WTC11 (cell line): ENCODE measurements at regions of chr3 and their contacts with region 1.

Region 1: GRCh38 chr3:138946181-138947059 is 517 bp downstream of the FOXL2 start:
- DNase-seq: peak; percentile 71
- ATAC-seq: peak; percentile 4
- H3K4me3 Mint-ChIP-seq: peak overlapping the region; percentile 61
- H3K27ac Mint-ChIP-seq: no peak overlapping the region
- H3K4me1 Mint-ChIP-seq: peaks cover 63% of the 10 kb centered on the region
- H3K27me3 Mint-ChIP-seq: peaks cover 98% of the 10 kb centered on the region
- CTCF ChIP-seq: peak; percentile 17; the same call in 1 of the 2 replicates

Region 2: DNA sequence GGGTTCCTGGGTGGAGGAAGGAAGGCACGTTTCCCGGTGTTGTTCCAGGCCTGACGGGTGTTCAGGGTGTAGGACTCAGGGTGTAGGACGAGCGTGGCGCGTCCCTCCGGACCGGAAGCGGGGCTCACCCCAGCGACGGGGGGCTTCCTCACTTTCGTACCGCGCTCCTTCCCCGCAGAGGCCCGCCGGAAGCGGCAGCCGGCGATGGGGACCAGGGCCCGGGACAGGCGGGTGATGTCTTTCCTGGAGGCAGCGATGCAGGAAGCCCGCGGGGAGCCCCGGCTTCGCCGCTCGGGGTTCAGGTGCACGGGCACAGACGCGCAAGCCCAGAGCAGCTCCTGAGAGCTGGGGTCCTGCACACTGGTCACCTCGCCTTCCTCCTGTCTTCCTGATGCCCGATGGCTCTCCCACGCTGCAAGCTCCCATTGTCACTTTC is 14.0 kb after region 1 on chr3:
- CTCF ChIA-PET with region 1: interaction called, 54 read pairs
- POLR2A ChIA-PET with region 1: interaction called, 6 read pairs
- DNase-seq: no peak
- ATAC-seq: no peak; the same call in 1 of the 2 replicates
- H3K4me3 Mint-ChIP-seq: peak overlapping the region; percentile 34
- H3K27ac Mint-ChIP-seq: no peak overlapping the region
- H3K4me1 Mint-ChIP-seq: peaks cover 3% of the 10 kb centered on the region; the same call in 1 of the 2 replicates
- H3K27me3 Mint-ChIP-seq: peaks cover 43% of the 10 kb centered on the region
- CTCF ChIP-seq: no peak

Region 3: DNA sequence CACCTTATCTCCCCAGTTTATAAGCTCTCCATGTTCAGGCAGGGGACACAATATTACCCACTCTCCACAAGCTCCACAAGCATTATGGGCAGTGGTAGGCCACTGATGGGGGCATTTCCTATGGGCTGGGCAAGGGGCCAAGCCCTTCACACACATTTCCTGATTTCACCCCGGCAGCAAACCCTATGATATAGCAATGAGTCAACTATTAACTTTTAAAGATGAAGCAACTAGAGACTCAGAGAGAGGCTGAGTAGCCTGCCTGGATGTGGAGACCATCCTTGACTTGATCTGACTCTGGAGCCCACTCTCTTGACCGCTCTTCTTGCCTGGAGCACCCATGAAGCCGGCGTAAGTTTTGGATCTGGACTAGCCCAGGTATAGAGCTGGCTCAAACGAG is 28.0 kb after region 1 on chr3:
- CTCF ChIA-PET with region 1: interaction called, 27 read pairs
- POLR2A ChIA-PET with region 1: no interaction called
- DNase-seq: no peak
- ATAC-seq: no peak
- H3K4me3 Mint-ChIP-seq: no peak overlapping the region
- H3K27ac Mint-ChIP-seq: no peak overlapping the region
- H3K4me1 Mint-ChIP-seq: no peaks in the 10 kb centered on the region
- H3K27me3 Mint-ChIP-seq: 0 out of 2 replicates have a peak, but pooled peaks cover 6% of the 10 kb centered on the region
- CTCF ChIP-seq: no peak

Region 4: DNA sequence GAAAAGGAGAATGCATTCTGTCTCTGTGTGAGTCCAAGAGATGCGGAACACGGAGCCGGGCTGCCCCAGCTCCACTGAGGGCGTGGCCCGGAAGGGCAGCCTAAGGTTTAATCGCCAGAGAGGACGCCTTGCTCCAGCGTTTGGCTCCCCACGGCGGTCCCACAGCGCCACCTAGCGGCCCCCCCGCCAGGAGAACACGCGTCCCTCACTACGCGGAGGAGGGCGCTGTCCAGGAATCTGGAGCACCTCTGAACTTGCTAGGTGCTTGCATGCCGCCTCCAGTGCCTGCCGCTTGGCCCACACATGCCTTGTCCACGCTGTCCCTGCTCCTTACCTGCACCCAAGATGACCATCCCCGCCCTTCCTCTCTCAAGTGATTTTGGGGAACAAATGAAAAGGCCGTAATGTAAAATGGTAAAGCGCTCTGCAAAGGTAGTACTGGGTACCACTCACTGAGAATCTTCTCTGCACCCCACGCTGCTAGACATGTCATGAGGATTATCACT is 383.0 kb after region 1 on chr3:
- CTCF ChIA-PET with region 1: interaction called, 11 read pairs
- POLR2A ChIA-PET with region 1: no interaction called
- DNase-seq: peak; percentile 96
- ATAC-seq: peak; percentile 97
- H3K4me3 Mint-ChIP-seq: peak overlapping the region; percentile 56
- H3K27ac Mint-ChIP-seq: no peak overlapping the region
- H3K4me1 Mint-ChIP-seq: peaks cover 4% of the 10 kb centered on the region; the same call in 1 of the 2 replicates
- H3K27me3 Mint-ChIP-seq: peaks cover 60% of the 10 kb centered on the region
- CTCF ChIP-seq: peak; percentile 99